AG04450 (cell line): ENCODE measurements at regions of chr18 and their contacts with region 1.

Region 1: GRCh38 chr18:24726727-24727492 is 266.5 kb downstream of the HRH4 start:
- DNase-seq: peak; percentile 57
- H3K4me3 ChIP-seq: no peak overlapping the region
- H3K27ac ChIP-seq: no peak overlapping the region
- H3K27me3 ChIP-seq: no peaks in the 10 kb centered on the region
- CTCF ChIP-seq: peak; percentile 89

Region 2: DNA sequence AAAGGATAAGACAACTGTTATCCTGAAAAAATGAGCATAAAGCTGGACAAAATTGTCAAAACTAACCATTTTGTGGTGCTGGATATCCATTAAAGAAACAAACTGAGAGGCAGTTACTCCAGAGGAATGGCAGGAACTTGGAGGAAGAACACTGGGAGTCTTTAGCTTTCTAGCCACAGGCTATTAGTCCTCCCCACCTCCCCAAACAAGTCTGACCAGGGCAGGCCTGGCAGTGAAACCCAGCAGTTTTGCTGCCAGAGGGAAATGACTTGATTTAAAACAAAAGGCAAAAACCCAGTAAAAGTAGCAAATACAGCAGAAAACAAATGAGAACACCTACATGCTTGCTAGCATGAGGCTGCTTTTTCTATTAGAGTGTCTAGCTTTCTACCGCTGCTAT is 364.2 kb before region 1 on chr18:
- CTCF ChIA-PET with region 1: interaction called, 10 read pairs
- POLR2A ChIA-PET with region 1: no interaction called
- DNase-seq: no peak
- H3K4me3 ChIP-seq: no peak overlapping the region
- H3K27ac ChIP-seq: no peak overlapping the region
- H3K27me3 ChIP-seq: no peaks in the 10 kb centered on the region
- CTCF ChIP-seq: no peak

Region 3: GRCh38 chr18:24413148-24413547 is 313.8 kb before region 1 on chr18:
- CTCF ChIA-PET with region 1: no interaction called
- POLR2A ChIA-PET with region 1: no interaction called
- DNase-seq: no peak
- H3K4me3 ChIP-seq: no peak overlapping the region
- H3K27ac ChIP-seq: no peak overlapping the region
- H3K27me3 ChIP-seq: peaks cover 26% of the 10 kb centered on the region
- CTCF ChIP-seq: peak; percentile 53

Region 4: DNA sequence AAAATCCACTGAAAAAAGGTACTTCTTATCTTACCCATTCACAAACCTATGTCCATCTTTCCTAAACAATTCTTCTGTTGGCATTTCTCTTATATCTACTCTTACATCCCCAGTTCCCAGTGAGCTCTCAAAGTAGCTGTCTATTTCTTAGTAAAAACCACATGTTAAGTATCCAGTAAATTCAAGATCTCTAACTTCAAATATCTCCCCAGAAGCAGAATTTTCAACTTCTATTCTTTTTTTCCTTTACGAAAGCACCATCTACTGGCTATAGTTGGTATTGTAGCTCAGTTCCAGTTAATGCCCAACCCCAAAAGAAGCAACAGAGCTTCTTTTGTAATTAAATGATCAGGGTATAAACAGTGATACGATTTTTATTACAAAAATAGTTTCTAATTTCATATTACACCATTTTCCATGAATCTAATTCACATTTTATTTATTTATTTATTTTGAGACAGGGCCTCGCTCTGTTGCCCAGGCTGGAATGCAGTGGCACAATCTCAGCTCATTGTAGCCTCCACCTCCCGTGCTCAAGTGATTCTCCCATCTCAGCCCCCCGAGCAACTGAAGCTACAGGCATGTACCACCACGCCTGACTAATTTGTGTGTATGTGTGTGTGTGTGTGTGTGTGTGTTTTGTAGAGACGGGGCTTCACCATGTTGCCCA is 238.0 kb before region 1 on chr18:
- CTCF ChIA-PET with region 1: interaction called, 123 read pairs
- POLR2A ChIA-PET with region 1: no interaction called
- DNase-seq: no peak
- H3K4me3 ChIP-seq: no peak overlapping the region
- H3K27ac ChIP-seq: no peak overlapping the region
- H3K27me3 ChIP-seq: peaks cover 13% of the 10 kb centered on the region
- CTCF ChIP-seq: peak; percentile 75

Region 5: GRCh38 chr18:24543805-24544498 is 183.0 kb before region 1 on chr18:
- CTCF ChIA-PET with region 1: interaction called, 15 read pairs
- POLR2A ChIA-PET with region 1: no interaction called
- DNase-seq: no peak
- H3K4me3 ChIP-seq: no peak overlapping the region
- H3K27ac ChIP-seq: no peak overlapping the region
- H3K27me3 ChIP-seq: peaks cover 5% of the 10 kb centered on the region
- CTCF ChIP-seq: peak; percentile 34; the same call in 1 of the 2 replicates

Region 6: GRCh38 chr18:24567199-24567598 is 159.7 kb before region 1 on chr18:
- CTCF ChIA-PET with region 1: no interaction called
- POLR2A ChIA-PET with region 1: no interaction called
- DNase-seq: no peak
- H3K4me3 ChIP-seq: no peak overlapping the region
- H3K27ac ChIP-seq: no peak overlapping the region
- H3K27me3 ChIP-seq: no peaks in the 10 kb centered on the region
- CTCF ChIP-seq: no peak

Region 7: GRCh38 chr18:24600076-24600654 is 126.7 kb before region 1 on chr18:
- CTCF ChIA-PET with region 1: interaction called, 115 read pairs
- POLR2A ChIA-PET with region 1: no interaction called
- DNase-seq: peak; percentile 10
- H3K4me3 ChIP-seq: no peak overlapping the region
- H3K27ac ChIP-seq: no peak overlapping the region
- H3K27me3 ChIP-seq: peaks cover 2% of the 10 kb centered on the region
- CTCF ChIP-seq: peak; percentile 63

Region 8: GRCh38 chr18:24704946-24705630 is 21.8 kb before region 1 on chr18:
- CTCF ChIA-PET with region 1: interaction called, 12 read pairs
- POLR2A ChIA-PET with region 1: no interaction called
- DNase-seq: peak; percentile 52
- H3K4me3 ChIP-seq: no peak overlapping the region
- H3K27ac ChIP-seq: peak overlapping the region; percentile 31
- H3K27me3 ChIP-seq: no peaks in the 10 kb centered on the region
- CTCF ChIP-seq: no peak

Region 9: DNA sequence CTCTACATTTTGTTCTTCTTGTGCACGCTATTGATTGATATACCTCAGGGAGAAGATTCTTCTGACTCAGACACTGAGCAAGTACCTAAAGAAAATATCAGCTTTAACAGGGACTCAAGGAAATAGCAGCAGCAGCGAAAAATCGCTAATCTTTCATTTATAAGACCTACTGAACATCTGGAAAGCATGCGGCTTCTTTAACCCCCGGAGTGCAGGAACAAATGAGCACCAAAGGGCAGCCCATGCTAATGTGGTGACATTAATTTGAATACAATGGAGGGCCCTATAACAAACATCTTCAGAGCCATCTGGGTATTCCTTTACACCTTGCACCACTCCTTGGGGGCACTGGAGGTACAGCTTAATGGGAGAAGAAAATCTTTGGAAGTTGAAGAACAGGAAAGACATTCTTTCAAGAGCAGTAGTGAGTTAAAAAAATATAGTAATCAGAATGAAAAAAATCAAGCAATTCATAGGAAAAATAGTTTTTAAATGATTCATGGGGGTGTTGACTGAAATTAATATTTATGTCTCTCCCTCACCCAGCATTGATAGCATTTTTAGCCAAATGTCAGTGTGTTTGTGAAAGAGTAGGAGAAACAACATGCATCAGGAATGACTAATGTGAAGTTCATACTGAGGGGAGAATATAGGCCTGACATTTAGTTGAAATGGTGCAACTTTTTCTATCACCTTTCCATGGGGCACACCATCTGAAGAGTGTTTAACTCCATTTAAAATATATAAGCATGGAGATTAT is 15.2 kb after region 1 on chr18:
- CTCF ChIA-PET with region 1: interaction called, 13 read pairs
- POLR2A ChIA-PET with region 1: no interaction called
- DNase-seq: no peak
- H3K4me3 ChIP-seq: no peak overlapping the region
- H3K27ac ChIP-seq: no peak overlapping the region
- H3K27me3 ChIP-seq: no peaks in the 10 kb centered on the region
- CTCF ChIP-seq: no peak